ENCODE measurements at regions of chrX and their contacts with region 1.

Region 1: DNA sequence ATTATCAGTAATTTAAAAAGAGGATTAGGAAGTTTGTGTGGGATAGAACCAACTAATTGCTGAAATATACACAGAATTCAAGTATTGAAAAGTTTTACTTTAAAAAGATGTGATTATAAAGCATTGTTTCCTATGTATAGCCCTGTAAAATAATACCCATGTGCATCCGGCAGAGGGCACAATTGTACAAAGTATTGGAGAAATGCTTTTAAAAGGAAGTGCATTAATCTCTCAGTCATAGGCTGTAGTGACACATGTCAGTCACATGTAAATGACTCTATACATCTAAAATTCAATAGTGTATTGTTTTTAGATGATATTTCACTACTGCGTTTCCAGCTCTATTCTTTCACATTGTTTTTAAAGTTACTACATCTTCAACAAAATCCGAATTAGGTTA is 9.7 kb upstream of the GEMIN8 start:
- DNase-seq: no peak
- ATAC-seq: peak; percentile 77
- H3K4me3 Mint-ChIP-seq: no peak overlapping the region
- H3K27ac Mint-ChIP-seq: no peak overlapping the region
- H3K4me1 Mint-ChIP-seq: no peaks in the 10 kb centered on the region
- H3K27me3 Mint-ChIP-seq: peaks cover 2% of the 10 kb centered on the region
- CTCF ChIP-seq: no peak

Region 2: GRCh38 chrX:14528629-14529289 is 489.4 kb after region 1 on chrX:
- CTCF ChIA-PET with region 1: no interaction called
- POLR2A ChIA-PET with region 1: no interaction called
- intact Hi-C with region 1: loop called (anchors 2 kb)
- DNase-seq: no peak
- ATAC-seq: no peak
- H3K4me3 Mint-ChIP-seq: no peak overlapping the region
- H3K27ac Mint-ChIP-seq: no peak overlapping the region
- H3K4me1 Mint-ChIP-seq: peaks cover 2% of the 10 kb centered on the region
- H3K27me3 Mint-ChIP-seq: peaks cover 4% of the 10 kb centered on the region
- CTCF ChIP-seq: no peak

Region 3: GRCh38 chrX:14697451-14697850 is 658.1 kb after region 1 on chrX:
- CTCF ChIA-PET with region 1: no interaction called
- POLR2A ChIA-PET with region 1: no interaction called
- intact Hi-C with region 1: loop called (anchors 1 kb)
- DNase-seq: no peak
- ATAC-seq: no peak
- H3K4me3 Mint-ChIP-seq: no peak overlapping the region
- H3K27ac Mint-ChIP-seq: no peak overlapping the region
- H3K4me1 Mint-ChIP-seq: no peaks in the 10 kb centered on the region
- H3K27me3 Mint-ChIP-seq: no peaks in the 10 kb centered on the region
- CTCF ChIP-seq: no peak

Region 4: DNA sequence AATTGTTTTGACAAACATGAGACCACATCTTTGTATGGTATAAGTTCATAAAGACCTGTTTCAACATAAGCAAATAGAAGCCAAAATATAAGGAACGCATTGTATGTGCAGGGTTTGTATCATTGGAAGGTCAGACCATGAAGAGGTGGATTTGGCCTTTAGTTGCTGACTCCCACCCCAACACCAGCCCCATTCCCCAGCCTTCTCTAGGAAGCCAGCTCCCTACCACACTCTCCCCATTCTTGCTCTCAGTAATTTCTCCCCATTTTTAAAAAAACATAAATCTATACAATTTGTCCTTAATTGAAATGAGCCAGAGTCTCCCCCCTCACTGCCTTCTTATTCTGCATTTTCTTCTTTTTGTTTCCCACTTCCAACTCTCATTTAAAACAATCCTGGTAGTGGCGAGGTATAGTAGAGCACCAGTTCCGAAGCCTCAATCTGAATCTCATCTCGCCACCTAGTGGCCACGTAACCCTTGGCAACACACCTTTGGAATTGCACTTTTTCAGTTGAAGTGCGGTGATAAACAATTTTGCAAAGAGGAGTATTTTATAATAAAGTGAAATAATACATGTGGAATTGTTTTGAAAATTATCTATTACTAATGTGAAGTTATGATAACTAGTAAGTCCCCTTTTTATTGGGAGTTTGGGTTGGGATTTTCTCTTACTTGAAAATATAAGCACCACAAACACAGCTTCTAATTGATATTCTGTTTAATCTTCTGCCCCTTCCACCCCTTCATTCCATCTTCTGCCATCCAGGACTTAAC is 1103.9 kb after region 1 on chrX:
- CTCF ChIA-PET with region 1: interaction called, 4 read pairs
- POLR2A ChIA-PET with region 1: no interaction called
- intact Hi-C with region 1: loop called (anchors 1 kb)
- DNase-seq: no peak
- ATAC-seq: peak; percentile 60
- H3K4me3 Mint-ChIP-seq: no peak overlapping the region
- H3K27ac Mint-ChIP-seq: no peak overlapping the region
- H3K4me1 Mint-ChIP-seq: peaks cover 2% of the 10 kb centered on the region
- H3K27me3 Mint-ChIP-seq: no peaks in the 10 kb centered on the region
- CTCF ChIP-seq: no peak

Region 5: DNA sequence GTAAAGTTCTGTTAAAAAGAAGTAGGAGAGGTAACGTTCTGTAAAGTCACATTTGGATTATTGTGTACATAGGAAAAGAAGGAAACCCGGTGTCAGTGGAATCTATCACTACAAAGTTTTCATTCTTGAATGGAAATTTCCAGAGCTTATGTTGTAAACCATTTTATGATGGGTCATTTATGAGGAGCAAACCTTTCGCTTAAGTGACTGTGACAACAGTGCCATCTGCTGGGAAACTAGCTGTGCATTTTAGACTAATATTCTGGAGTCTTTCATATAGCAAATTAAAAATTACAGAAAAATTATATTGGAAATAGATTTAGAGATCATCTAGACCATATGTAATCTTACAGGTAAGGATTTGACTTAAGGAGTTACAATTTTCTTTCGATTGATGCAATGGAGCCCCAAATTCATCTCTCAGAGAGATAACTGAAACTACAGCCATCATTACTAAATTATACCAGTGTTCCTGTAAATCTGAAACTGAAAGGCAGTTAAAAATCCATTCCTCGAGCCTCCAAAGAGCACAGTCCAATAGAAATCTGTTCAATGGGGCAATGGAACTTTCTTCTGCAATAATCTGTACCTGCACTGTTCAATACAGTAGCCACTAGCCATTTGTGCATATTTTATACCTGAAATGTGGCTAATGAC is 1203.7 kb after region 1 on chrX:
- CTCF ChIA-PET with region 1: interaction called, 13 read pairs
- POLR2A ChIA-PET with region 1: no interaction called
- intact Hi-C with region 1: loop called (anchors 1 kb)
- DNase-seq: no peak
- ATAC-seq: no peak
- H3K4me3 Mint-ChIP-seq: no peak overlapping the region
- H3K27ac Mint-ChIP-seq: no peak overlapping the region
- H3K4me1 Mint-ChIP-seq: no peaks in the 10 kb centered on the region
- H3K27me3 Mint-ChIP-seq: no peaks in the 10 kb centered on the region
- CTCF ChIP-seq: no peak

Region 6: DNA sequence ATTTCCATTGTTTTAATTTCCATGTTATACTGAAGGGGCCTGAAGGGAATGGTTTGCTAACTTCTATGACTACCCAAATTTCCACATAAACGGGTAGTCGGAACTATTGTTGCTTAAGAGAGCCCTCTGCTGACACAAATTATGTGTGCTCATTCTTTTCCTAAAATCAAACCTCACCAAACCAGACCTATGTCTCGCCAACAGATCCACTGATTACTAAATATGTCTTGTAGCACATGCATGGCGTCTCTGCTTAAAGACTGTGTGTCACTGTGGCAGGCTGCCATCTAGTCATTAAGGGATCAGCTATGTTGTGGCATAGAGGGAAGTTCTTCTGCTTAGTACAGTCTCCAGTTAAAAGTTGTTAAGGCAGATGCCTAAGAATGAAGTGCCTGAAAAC is 1428.7 kb after region 1 on chrX:
- CTCF ChIA-PET with region 1: no interaction called
- POLR2A ChIA-PET with region 1: no interaction called
- intact Hi-C with region 1: loop called (anchors 5 kb)
- DNase-seq: no peak
- ATAC-seq: peak; percentile 28
- H3K4me3 Mint-ChIP-seq: no peak overlapping the region
- H3K27ac Mint-ChIP-seq: no peak overlapping the region
- H3K4me1 Mint-ChIP-seq: peaks cover 9% of the 10 kb centered on the region
- H3K27me3 Mint-ChIP-seq: no peaks in the 10 kb centered on the region
- CTCF ChIP-seq: no peak